ENCODE measurements at regions of chr4 and their contacts with region 1.

Region 1: GRCh38 chr4:145618932-145619638 is at the start of gene MMAA:
- DNase-seq: peak; percentile 93
- H3K4me3 Mint-ChIP-seq: peak within 1 kb of the TSS; percentile 94
- H3K27ac Mint-ChIP-seq: peak within 1 kb of the TSS; percentile 99
- H3K4me1 Mint-ChIP-seq: peaks cover 49% of the 10 kb centered on the region
- H3K27me3 Mint-ChIP-seq: no peaks in the 10 kb centered on the region
- total RNA-seq, gene MMAA: 15.9 and 16.0 TPM in 2 replicates

Region 2: GRCh38 chr4:145180298-145181090 is 438.6 kb before region 1 on chr4 and contains the start of gene OTUD4:
- intact Hi-C with region 1: loop called (anchors 1 kb)
- DNase-seq: peak; percentile 94
- H3K4me3 Mint-ChIP-seq: peak within 1 kb of the TSS; percentile 96
- H3K27ac Mint-ChIP-seq: peak within 1 kb of the TSS; percentile 94
- H3K4me1 Mint-ChIP-seq: peaks cover 14% of the 10 kb centered on the region
- H3K27me3 Mint-ChIP-seq: no peaks in the 10 kb centered on the region
- total RNA-seq, gene OTUD4: 71.7 and 80.4 TPM in 2 replicates

Region 3: GRCh38 chr4:145299380-145300076 is 319.6 kb before region 1 on chr4:
- intact Hi-C with region 1: loop called (anchors 5 kb)
- DNase-seq: peak; percentile 21
- H3K4me3 Mint-ChIP-seq: no peak overlapping the region
- H3K27ac Mint-ChIP-seq: peak overlapping the region; percentile 53
- H3K4me1 Mint-ChIP-seq: peaks cover 14% of the 10 kb centered on the region
- H3K27me3 Mint-ChIP-seq: peaks cover 21% of the 10 kb centered on the region

Region 4: GRCh38 chr4:145418739-145419138 is 200.3 kb before region 1 on chr4:
- intact Hi-C with region 1: no loop called
- DNase-seq: no peak
- H3K4me3 Mint-ChIP-seq: no peak overlapping the region
- H3K27ac Mint-ChIP-seq: no peak overlapping the region
- H3K4me1 Mint-ChIP-seq: no peaks in the 10 kb centered on the region
- H3K27me3 Mint-ChIP-seq: peaks cover 15% of the 10 kb centered on the region

Region 5: GRCh38 chr4:145719752-145720624 is 100.9 kb after region 1 on chr4:
- intact Hi-C with region 1: no loop called
- DNase-seq: no peak
- H3K4me3 Mint-ChIP-seq: no peak overlapping the region
- H3K27ac Mint-ChIP-seq: peak overlapping the region; percentile 46
- H3K4me1 Mint-ChIP-seq: peaks cover 16% of the 10 kb centered on the region
- H3K27me3 Mint-ChIP-seq: no peaks in the 10 kb centered on the region

Region 6: GRCh38 chr4:145732895-145733880 is 114.1 kb after region 1 on chr4:
- intact Hi-C with region 1: loop called (anchors 2 kb)
- DNase-seq: peak; percentile 81
- H3K4me3 Mint-ChIP-seq: peak overlapping the region; percentile 68
- H3K27ac Mint-ChIP-seq: peak overlapping the region; percentile 67
- H3K4me1 Mint-ChIP-seq: peaks cover 18% of the 10 kb centered on the region
- H3K27me3 Mint-ChIP-seq: no peaks in the 10 kb centered on the region

Region 7: DNA sequence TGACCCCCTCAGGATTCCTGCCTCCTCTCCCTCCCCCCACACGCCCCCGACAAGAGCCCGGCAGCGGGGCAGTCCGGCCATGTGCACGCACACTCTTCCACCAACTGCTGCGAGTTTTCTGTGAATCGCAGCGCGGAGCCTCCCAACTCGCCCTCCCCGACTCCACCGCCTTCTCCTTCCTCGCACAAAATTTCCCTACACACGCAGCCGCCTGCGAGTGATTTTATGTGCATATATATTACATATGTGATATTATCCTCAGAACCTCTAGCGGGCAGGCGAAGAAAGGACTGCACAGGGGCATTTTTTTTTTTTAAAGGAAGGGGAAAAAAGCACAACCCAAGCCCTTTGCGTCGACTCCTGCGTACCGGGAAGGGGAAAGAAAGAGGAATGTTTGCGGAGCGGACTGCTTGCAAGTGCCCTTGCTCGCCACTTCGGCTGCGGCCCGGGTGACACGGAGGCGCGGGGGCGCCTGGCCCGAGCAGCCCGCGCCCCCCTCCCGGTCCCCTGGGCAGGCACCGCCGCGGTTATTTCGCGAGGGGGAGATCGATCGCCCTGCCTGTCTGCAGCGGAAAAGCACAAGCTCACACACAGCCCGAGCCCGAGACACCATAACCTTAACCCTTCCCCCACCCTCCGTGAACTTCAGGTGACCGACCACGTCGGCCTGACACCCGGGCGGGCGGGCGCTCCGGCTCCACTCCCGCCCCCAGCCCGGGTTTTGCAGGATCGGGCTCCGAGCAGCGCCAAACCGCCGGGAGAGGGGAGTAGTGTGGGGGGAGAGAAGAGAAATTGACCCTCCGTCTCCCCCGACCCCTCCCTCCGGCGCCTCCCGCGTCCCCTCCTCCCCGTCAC is 317.3 kb after region 1 on chr4:
- intact Hi-C with region 1: loop called (anchors 1 kb)
- DNase-seq: peak; percentile 58
- H3K4me3 Mint-ChIP-seq: peak overlapping the region; percentile 94
- H3K27ac Mint-ChIP-seq: peak overlapping the region; percentile 96
- H3K4me1 Mint-ChIP-seq: peaks cover 44% of the 10 kb centered on the region
- H3K27me3 Mint-ChIP-seq: no peaks in the 10 kb centered on the region

Region 8: DNA sequence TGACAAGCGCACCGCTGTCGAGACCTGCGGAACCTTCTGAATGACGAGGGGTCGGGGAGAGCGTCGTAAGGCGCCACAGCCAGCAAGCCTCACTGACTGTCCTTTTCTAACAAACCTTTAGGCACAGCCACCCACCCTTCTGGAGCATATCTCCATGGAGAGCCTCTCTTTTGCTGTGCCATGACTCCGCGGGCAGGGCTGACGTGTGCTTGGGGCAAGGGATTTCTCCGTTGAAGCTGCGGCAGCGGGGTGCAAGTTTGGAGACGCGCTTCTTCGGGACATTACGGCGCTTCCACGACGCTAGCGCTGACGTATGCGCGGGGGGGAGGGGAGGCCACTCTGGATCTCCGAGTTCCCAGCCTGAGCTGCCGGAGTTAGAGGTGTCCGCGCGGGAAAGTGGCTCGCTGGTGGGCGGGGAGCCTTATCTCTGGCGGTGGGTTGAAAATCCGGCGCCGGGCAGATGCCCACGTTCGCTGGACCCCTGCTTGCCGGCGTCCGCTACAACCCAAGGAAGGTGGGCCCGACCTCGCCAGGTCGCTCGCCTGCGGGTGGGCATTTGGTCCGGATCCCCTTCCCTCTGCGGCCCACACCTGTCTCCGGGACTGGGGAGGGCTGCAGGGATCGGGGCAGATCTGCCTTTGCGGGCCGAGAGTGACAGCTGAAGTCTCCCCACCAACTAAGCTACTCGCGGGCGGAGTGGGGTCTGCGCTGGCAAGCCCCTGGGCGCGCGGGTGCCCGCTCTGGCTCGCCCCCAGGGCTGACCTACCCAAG is 903.2 kb after region 1 on chr4:
- intact Hi-C with region 1: loop called (anchors 5 kb)
- DNase-seq: peak; percentile 80
- H3K4me3 Mint-ChIP-seq: no peak overlapping the region
- H3K27ac Mint-ChIP-seq: no peak overlapping the region
- H3K4me1 Mint-ChIP-seq: peaks cover 28% of the 10 kb centered on the region
- H3K27me3 Mint-ChIP-seq: no peaks in the 10 kb centered on the region